Cardiac septum (tissue), 1 donor: ENCODE measurements at regions of chr22 and their contacts with region 1.

Region 1: DNA sequence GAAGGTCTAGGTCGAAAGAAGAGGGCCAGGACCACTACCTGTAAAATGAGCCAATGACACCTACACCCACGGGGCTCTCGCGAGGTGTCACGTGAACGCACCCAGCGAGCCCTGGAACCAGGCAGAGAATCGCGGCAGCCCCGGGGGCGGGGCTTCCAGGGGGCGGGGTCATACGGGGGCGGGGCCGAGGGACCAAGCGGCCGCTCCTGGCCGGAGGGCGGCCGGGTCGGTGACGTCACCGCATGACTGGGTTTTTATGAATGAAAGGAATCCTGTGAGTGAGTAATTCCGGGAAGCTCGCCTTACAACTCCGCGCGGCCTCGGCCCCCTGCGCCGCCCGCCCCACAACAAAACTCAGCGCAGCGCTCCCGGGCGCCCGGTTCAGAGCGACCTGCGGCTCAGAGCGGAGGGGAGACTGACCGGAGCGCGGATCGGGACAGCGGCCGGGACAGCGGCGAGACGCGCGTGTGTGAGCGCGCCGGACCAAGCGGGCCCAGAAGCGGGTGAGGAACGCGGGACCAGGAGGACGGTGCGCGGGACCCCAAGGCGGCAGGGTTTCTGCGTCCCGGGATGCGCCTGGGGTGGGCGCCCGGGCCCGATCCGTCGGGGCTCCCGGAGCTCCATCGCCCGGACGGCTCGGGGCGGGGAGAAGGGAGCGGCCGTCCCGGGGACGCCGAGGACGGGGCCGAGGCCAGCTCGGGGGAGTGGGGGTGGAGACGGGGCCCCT is at the start of gene MAFF:
- DNase-seq: peak; percentile 99
- total RNA-seq, gene MAFF: 9.8 TPM

Region 2: DNA sequence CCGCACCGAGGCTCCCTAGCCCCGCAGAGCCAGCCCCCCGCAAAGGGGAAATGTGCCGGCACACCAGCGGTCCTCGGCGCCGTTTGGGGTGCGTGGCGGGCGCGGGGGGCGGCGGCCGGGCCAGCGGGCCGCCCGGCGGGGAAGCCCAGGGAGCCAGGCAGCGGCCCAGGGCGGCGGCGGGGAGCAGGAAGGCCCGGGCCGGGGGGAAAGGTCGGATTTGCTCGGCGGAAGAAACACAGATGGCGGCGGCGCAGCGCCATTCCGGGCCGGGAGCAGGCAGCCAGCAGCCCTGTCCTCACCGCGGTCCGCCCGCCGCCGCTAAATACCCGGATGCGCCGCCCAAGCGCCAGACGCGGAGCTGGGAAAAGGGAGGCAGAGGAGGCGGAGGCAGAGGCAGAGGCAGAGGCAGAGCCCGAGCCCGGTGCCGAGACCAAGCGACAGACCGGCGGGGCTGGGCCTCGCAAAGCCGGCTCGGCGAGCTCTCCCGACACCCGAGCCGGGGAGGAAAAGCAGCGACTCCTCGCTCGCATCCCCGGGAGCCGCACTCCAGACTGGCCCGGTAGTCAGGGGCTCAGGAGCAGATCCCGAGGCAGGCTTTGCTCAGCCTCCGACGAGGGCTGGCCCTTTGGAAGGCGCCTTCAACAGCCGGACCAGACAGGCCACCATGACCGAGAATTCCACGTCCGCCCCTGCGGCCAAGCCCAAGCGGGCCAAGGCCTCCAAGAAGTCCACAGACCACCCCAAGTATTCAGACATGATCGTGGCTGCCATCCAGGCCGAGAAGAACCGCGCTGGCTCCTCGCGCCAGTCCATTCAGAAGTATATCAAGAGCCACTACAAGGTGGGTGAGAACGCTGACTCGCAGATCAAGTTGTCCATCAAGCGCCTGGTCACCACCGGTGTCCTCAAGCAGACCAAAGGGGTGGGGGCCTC is 396.7 kb before region 1 on chr22:
- intact Hi-C with region 1: no loop called
- DNase-seq: peak; percentile 95

Region 3: GRCh38 chr22:38080850-38081635 is 120.8 kb before region 1 on chr22:
- intact Hi-C with region 1: no loop called
- DNase-seq: no peak

Region 4: DNA sequence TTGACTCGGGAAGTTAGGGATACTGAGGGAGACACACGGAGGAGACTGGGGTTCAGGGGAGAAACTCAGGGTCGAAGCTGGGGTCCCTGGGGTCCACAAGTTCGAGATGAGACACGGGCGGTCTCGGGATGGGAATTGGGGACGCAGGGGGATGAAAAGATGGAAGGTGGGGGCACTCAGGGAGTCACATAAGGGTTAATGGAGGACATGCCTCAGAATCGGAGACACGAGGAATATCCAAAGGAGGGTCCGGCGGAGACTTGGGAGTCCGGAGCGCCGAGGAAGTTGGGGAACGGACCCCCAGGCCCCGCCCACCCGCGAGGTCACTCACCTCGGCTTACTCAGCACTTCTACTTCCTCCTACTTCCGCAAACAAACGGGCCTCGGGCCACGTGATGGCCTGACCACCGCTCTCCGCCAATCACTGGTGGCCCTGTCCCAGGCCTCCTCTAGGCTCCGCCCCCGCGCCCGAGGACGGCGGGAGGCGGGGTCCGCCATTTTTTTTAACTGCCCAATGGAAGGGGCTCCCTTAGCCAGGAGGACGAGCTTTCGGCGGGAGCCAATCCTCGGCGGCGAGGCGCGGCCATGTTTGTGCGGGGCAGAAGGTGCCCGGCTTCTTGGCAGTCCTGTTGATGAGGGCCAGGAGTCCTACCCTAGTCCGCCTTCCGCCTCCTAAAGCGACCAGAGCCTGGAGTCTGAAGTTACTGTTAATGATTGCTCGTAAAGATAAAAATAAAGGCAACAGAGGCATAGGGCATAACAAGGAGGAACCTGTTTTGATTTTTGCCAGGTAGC is 20.2 kb before region 1 on chr22 and contains the start of gene PLA2G6:
- intact Hi-C with region 1: loop called (anchors 2 kb)
- DNase-seq: peak; percentile 99
- total RNA-seq, gene PLA2G6: 12.5 TPM

Region 5: GRCh38 chr22:38304526-38304925 is 102.7 kb after region 1 on chr22:
- intact Hi-C with region 1: loop called (anchors 5 kb)
- DNase-seq: no peak